ENCODE measurements at regions of chr15 and their contacts with region 1.

Region 1: GRCh38 chr15:44308415-44308814 is 19.9 kb downstream of the GOLM2 start:
- DNase-seq: peak; percentile 56
- H3K4me3 Mint-ChIP-seq: peak overlapping the region; percentile 46
- H3K27ac Mint-ChIP-seq: peak overlapping the region; percentile 89
- H3K4me1 Mint-ChIP-seq: peaks cover 39% of the 10 kb centered on the region
- H3K27me3 Mint-ChIP-seq: no peaks in the 10 kb centered on the region

Region 2: GRCh38 chr15:43751885-43752284 is 556.5 kb before region 1 on chr15:
- CTCF ChIA-PET with region 1: no interaction called
- POLR2A ChIA-PET with region 1: no interaction called
- intact Hi-C with region 1: no loop called
- DNase-seq: no peak
- H3K4me3 Mint-ChIP-seq: no peak overlapping the region
- H3K27ac Mint-ChIP-seq: no peak overlapping the region
- H3K4me1 Mint-ChIP-seq: peaks cover 41% of the 10 kb centered on the region
- H3K27me3 Mint-ChIP-seq: no peaks in the 10 kb centered on the region

Region 3: DNA sequence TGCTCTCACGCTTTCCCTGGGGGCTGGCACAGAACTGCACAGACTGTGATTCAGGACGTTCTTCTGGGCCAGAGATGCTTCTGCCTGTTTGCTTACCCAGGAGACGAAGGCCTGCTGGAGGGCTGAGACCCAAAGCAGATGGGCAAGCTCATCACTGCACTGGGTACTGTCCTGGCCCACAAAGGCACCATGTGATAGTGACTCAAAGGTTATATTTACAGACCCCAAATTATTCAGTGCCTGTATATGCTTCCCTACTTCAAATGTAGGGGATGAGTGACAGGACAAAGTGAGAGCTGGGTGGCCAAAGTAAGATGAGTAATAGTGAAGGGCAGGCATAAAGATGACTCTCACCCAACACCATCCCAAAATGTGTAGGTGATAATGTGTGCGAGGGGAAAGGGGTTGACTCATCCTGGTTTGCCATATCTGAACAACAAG is 354.2 kb before region 1 on chr15:
- CTCF ChIA-PET with region 1: no interaction called
- POLR2A ChIA-PET with region 1: no interaction called
- intact Hi-C with region 1: loop called (anchors 2 kb)
- DNase-seq: peak; percentile 38
- H3K4me3 Mint-ChIP-seq: no peak overlapping the region
- H3K27ac Mint-ChIP-seq: no peak overlapping the region
- H3K4me1 Mint-ChIP-seq: peaks cover 9% of the 10 kb centered on the region
- H3K27me3 Mint-ChIP-seq: peaks cover 10% of the 10 kb centered on the region

Region 4: DNA sequence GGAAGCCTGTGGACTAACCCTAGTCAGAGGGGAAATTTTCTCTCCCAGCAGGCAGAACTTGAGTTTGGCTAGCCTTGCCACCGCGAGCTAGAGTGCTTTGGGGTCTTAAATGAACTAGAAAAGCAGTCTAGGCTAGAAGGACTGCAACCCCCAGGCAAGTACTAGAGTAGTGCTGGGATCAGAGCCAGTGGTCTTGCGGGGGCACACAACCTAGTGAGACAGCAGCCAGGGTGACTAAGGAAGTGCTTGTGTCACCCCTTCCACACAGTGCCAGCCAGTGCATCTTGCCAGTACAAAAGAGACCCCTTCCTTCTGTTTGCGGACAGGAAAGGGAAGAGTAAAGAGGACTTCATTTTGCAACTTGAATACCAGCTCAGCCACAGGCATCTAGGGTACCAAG is 39.1 kb after region 1 on chr15:
- CTCF ChIA-PET with region 1: no interaction called
- POLR2A ChIA-PET with region 1: no interaction called
- intact Hi-C with region 1: no loop called
- DNase-seq: no peak
- H3K4me3 Mint-ChIP-seq: no peak overlapping the region
- H3K27ac Mint-ChIP-seq: no peak overlapping the region
- H3K4me1 Mint-ChIP-seq: no peaks in the 10 kb centered on the region
- H3K27me3 Mint-ChIP-seq: no peaks in the 10 kb centered on the region

Region 5: DNA sequence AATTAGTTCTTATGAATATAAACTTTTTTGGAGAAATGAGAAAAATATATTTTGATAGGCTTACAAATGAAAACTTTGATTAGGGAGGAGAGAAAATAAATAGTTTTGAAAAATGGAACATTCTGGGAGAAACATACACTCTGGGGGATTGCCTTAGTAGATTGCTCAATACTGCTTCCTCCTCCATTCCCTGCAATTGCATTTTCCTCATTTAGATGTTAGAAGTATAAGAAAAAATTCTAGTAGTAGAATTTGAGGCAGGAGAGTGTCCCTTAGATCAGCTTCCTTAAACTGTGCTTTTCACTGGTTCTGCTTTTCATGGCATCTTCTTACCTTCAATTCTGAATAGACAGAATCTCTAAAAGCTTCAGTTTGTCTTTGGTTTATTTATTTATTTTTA is 72.8 kb after region 1 on chr15:
- CTCF ChIA-PET with region 1: no interaction called
- POLR2A ChIA-PET with region 1: no interaction called
- intact Hi-C with region 1: no loop called
- DNase-seq: no peak
- H3K4me3 Mint-ChIP-seq: no peak overlapping the region
- H3K27ac Mint-ChIP-seq: no peak overlapping the region
- H3K4me1 Mint-ChIP-seq: peaks cover 10% of the 10 kb centered on the region
- H3K27me3 Mint-ChIP-seq: no peaks in the 10 kb centered on the region

Region 6: DNA sequence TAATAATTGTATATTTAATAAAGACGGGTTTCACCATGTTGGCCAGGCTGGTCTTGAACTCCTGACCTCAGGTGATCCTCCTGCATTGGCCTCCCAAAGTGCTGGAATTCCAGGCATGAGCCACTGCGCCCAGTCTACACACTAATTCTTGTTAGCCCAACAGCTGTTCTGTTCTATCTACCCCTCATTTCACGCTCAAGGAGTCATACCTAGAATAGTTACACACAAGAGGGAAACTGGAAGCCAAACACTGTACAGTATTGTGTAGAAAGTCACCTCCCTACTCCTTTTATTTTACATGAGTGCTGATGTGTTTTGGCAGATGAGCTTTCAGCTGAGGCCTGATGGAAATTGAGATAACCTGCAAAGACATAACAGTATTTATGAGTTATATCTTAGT is 105.6 kb after region 1 on chr15:
- CTCF ChIA-PET with region 1: no interaction called
- POLR2A ChIA-PET with region 1: no interaction called
- intact Hi-C with region 1: loop called (anchors 1 kb)
- DNase-seq: peak; percentile 27
- H3K4me3 Mint-ChIP-seq: no peak overlapping the region
- H3K27ac Mint-ChIP-seq: no peak overlapping the region
- H3K4me1 Mint-ChIP-seq: peaks cover 4% of the 10 kb centered on the region
- H3K27me3 Mint-ChIP-seq: no peaks in the 10 kb centered on the region

Region 7: DNA sequence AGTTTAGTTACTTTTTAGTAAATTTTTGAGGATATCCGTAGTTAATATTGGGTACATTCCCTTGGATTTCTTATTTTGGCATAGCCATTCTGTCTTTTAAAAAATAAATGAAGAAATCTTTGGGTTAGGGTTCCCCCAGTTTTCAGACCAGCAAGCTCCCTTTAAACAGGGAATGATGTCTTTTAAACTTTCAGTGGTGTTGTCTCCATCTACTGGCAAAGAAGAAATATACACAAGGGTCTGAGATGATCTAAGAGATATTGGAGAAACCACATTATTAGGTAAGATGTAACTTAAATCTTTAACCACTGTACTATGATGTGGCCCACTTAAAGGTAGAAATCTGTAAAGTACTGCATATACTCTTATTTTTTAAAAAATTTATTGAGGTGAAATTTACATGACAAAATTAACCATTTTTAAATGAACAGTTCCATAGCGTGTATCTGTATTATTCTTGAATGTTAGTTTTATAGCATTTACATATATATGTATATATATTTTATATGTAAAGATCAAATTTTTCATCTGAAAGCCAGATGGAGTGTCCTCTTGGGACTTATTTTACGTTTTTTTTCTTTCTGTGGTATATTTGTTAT is 193.5 kb after region 1 on chr15:
- CTCF ChIA-PET with region 1: interaction called, 3 read pairs
- POLR2A ChIA-PET with region 1: interaction called, 3 read pairs
- intact Hi-C with region 1: loop called (anchors 1 kb)
- DNase-seq: no peak
- H3K4me3 Mint-ChIP-seq: no peak overlapping the region
- H3K27ac Mint-ChIP-seq: peak overlapping the region; percentile 48
- H3K4me1 Mint-ChIP-seq: peaks cover 22% of the 10 kb centered on the region
- H3K27me3 Mint-ChIP-seq: no peaks in the 10 kb centered on the region

Region 8: DNA sequence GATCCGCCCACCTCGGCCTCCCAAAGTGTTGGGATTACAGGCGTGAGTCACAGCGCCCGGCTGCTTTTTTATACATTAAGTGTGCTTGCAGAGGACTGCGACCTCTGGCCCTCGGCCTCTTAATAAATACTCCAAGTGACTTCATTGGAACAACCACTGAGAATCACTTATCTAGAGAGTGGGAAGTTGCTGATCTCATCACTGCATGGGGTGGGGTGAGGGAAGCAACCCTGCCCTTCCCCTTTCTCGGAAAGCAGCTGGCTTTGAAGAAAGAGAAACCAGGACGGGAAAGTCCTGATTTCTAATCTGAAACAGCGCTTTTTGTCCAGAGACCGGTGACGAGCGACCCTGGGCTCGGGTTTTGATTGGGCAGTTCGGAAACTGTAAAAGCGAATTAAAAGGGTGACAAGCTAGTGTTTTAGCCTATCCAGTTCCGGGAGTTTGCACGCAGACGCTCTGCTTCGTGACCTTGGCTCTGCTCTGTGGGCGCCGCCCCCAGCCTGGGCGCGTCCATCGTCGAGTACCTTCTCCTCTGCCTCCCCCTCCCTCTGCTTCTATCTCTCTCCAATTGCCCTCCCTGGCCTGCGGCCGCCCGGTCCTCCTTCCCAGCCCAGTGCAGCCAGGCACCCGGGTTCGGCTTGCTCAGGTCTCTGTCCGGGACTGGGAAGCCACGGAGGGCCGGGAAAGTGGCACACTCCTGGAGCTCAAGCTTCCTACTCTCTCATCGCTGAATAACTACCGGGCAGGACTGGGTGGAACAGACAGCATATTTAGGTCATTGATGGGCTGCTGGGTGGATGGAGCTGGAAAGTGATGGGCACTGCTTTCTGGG is 420.4 kb after region 1 on chr15:
- CTCF ChIA-PET with region 1: no interaction called
- POLR2A ChIA-PET with region 1: no interaction called
- intact Hi-C with region 1: loop called (anchors 10 kb)
- DNase-seq: peak; percentile 97
- H3K4me3 Mint-ChIP-seq: peak overlapping the region; percentile 100
- H3K27ac Mint-ChIP-seq: peak overlapping the region; percentile 100
- H3K4me1 Mint-ChIP-seq: peaks cover 66% of the 10 kb centered on the region
- H3K27me3 Mint-ChIP-seq: no peaks in the 10 kb centered on the region

Region 9: GRCh38 chr15:44882499-44882968 is 574.1 kb after region 1 on chr15:
- CTCF ChIA-PET with region 1: no interaction called
- POLR2A ChIA-PET with region 1: no interaction called
- intact Hi-C with region 1: loop called (anchors 10 kb)
- DNase-seq: peak; percentile 82
- H3K4me3 Mint-ChIP-seq: peak overlapping the region; percentile 8
- H3K27ac Mint-ChIP-seq: peak overlapping the region; percentile 59
- H3K4me1 Mint-ChIP-seq: peaks cover 34% of the 10 kb centered on the region
- H3K27me3 Mint-ChIP-seq: peaks cover 11% of the 10 kb centered on the region